Naive thymus-derived CD8-positive, alpha-beta T cell (primary cell): ENCODE measurements at regions of chr9 and their contacts with region 1.

Region 1: DNA sequence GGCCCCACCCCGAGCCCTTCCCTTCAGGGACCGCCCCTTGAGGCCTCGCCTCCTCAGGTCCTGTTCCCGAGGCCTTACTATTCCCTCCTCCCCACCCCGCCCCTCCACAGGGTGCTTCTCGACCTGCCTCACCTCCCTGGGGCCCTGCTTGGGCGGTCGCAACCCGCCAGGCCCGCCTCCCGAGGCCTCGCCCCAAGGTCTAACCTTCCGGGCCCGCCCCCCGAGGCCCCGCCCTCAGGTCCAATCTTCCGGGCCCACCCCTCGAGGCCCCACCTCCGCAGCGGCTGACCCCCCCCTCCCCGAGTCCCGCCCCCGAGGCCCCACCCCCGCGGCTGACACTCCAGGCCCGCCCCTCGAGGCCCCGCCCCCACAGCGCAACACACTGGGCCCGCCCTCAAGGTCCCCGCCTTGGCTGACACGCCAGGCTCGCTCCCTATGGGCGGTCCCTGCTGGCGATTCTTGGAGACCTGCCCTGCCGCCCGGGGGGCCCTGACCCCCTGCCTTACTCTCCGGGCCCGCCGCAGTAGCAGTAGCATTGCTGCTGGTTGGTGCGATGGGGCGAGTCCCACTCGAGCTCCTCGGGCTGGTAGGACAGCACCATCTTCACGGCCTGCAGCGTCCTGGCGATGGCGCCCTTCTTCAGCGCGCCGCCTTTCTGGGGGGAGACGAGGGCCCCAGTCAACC is 8.2 kb downstream of the PHF19 start:
- DNase-seq: peak; percentile 93 to 100 (median 96)
- ATAC-seq: peak; percentile 85
- H3K4me3 Mint-ChIP-seq: peak overlapping the region; percentile 80 to 98 (median 94)
- H3K27ac Mint-ChIP-seq: peak overlapping the region; percentile 92 to 99 (median 96)
- H3K4me1 Mint-ChIP-seq: peaks cover 11 to 43% (median 27%) of the 10 kb centered on the region in 4 donors
- H3K27me3 Mint-ChIP-seq: no peaks in the 10 kb centered on the region

Region 2: GRCh38 chr9:120730661-120731514 is 137.9 kb before region 1 on chr9:
- POLR2A ChIA-PET with region 1: no interaction called
- DNase-seq: no peak
- ATAC-seq: no peak
- H3K4me3 Mint-ChIP-seq: no peak overlapping the region
- H3K27ac Mint-ChIP-seq: no peak overlapping the region
- H3K4me1 Mint-ChIP-seq: peaks cover 5 to 14% (median 6%) of the 10 kb centered on the region in 4 donors
- H3K27me3 Mint-ChIP-seq: no peaks in the 10 kb centered on the region

Region 3: DNA sequence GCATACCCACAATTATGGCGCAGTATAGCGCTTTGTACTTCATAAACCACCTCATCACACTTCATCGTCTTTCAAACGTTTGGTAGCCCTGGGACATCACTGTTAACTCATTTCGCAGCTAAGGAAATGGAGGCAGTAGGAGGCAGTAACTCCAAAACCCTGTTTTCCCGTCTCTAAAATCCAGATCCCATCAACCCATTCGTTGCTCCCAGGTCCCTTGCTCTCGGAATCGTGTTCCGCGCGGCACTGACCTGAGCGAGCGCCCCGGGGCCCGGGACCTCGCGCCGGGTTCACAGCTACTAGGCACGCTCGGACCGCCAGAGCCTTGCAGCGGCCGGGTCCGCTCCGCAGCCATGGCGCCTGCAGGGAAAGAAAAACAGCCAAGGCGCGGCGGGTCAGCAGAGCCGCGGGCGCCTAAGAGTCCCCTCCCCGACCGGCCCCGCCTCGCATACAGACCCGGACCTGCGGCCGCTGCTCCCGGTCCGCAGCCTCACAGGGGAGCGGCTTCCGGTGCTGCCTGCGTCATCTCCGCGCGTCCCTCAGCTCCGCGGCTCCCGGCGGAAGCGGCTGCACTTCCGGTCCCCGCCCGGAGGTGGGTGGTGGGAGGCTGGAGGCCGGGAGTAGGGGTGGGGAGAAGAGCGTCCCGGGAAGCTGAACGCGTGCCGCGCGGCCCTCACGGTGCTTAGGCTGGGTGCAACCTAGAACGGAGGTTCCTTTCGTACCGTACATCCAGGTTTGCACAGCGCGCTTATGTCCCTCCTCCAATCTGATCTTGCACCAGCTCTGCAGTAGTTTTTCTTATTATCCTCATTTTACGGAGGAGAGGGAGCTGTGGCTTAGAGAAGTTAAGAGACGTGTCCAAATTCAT is 75.7 kb before region 1 on chr9 and contains the start of gene FBXW2:
- POLR2A ChIA-PET with region 1: interaction called, 27 read pairs
- DNase-seq: peak; percentile 75 to 87 (median 80)
- ATAC-seq: peak; percentile 81 to 84
- H3K4me3 Mint-ChIP-seq: peak within 1 kb of the TSS; percentile 82 to 98 (median 91)
- H3K27ac Mint-ChIP-seq: peak within 1 kb of the TSS; percentile 90 to 99 (median 97)
- H3K4me1 Mint-ChIP-seq: peaks cover 20 to 58% (median 56%) of the 10 kb centered on the region in 4 donors
- H3K27me3 Mint-ChIP-seq: no peaks in the 10 kb centered on the region
- polyA plus RNA-seq, gene FBXW2: 29.6 to 37.1 (median 31.7) TPM

Region 4: GRCh38 chr9:120807607-120808379 is 61.0 kb before region 1 on chr9:
- POLR2A ChIA-PET with region 1: no interaction called
- DNase-seq: no peak
- ATAC-seq: no peak
- H3K4me3 Mint-ChIP-seq: no peak overlapping the region
- H3K27ac Mint-ChIP-seq: no peak overlapping the region
- H3K4me1 Mint-ChIP-seq: peaks cover 0 to 3% (median 0%) of the 10 kb centered on the region in 4 donors
- H3K27me3 Mint-ChIP-seq: no peaks in the 10 kb centered on the region

Region 5: GRCh38 chr9:120842690-120843499 is 25.9 kb before region 1 on chr9 and contains the start of gene PSMD5:
- POLR2A ChIA-PET with region 1: interaction called, 37 read pairs
- DNase-seq: peak; percentile 83 to 99 (median 96)
- ATAC-seq: peak; percentile 88
- H3K4me3 Mint-ChIP-seq: peak within 1 kb of the TSS; percentile 90 to 100 (median 93)
- H3K27ac Mint-ChIP-seq: peak within 1 kb of the TSS; percentile 92 to 98 (median 96)
- H3K4me1 Mint-ChIP-seq: peaks cover 40 to 86% (median 81%) of the 10 kb centered on the region in 4 donors
- H3K27me3 Mint-ChIP-seq: no peaks in the 10 kb centered on the region
- polyA plus RNA-seq, gene PSMD5: 13.7 to 23.4 (median 23.3) TPM

Region 6: DNA sequence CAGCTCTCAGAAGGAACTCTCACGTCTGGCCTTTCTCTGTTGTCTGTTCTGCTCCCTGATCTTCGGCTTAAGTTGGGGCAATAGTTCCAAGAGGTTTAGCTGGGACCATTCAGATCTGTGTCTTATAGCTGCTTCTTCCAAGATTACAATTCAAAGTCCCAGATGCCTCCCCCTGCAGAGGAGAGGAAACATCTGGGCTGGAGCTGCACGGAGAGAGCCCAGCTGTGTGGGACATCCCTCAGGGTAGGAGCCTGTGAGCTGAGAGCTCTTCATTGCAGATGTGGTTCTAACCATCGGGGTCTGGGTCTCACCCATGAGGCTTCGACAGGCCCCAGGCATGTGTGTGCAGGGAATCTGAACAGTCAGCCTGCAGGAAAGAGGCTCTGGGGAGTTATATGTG is 17.1 kb after region 1 on chr9:
- POLR2A ChIA-PET with region 1: interaction called, 320 read pairs
- DNase-seq: no peak
- ATAC-seq: no peak
- H3K4me3 Mint-ChIP-seq: peak overlapping the region in 2 of 10 donors; percentile 7 to 20
- H3K27ac Mint-ChIP-seq: peak overlapping the region in 9 of 10 donors; percentile 7 to 92 (median 70)
- H3K4me1 Mint-ChIP-seq: peaks cover 33 to 79% (median 69%) of the 10 kb centered on the region in 4 donors
- H3K27me3 Mint-ChIP-seq: no peaks in the 10 kb centered on the region

Region 7: DNA sequence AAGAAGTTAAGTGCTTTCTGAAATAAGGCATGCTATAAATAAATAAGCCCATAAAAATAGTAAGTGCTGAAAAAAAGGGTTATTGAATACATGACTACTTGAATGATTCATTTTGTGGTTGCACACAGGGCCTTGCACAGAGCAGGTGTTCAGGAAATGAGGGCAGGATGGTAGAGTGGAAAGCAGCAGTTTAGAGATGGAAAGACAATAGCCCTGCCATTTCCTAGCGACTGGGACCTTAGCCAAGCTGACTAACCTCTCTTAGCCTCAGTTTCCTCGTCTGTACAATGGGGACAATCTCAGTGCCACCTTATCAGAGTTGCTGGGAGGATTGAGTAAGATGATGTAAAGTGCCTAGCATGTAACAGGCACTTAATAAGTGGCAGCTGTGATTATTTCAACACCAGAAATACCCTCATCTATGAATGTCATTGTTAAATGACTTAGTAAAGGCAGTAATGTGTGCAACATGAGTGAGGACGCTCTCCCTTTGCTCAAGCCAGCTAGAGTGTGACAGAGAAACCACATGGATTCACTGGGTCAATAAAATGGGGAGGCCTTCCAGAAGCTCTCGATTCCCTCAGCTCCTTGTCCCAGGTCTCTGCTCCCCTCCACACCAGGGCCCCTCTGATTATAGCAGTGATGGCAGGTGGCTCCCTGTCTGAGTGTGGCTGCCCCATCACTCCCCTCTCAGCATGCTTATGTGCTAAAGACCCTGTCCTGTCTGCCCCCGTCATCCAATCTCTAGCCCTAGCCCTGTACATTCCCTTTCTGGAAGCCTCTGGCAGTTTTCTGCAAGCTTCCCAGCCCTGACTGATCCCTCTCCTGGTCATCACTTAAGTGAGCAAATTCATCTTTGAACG is 24.2 kb after region 1 on chr9:
- POLR2A ChIA-PET with region 1: interaction called, 320 read pairs
- DNase-seq: peak in 7 of 10 donors; percentile 39 to 82 (median 54)
- ATAC-seq: peak; percentile 29 to 61
- H3K4me3 Mint-ChIP-seq: peak overlapping the region in 9 of 10 donors; percentile 58 to 83 (median 77)
- H3K27ac Mint-ChIP-seq: peak overlapping the region; percentile 90 to 99 (median 98)
- H3K4me1 Mint-ChIP-seq: peaks cover 35 to 90% (median 76%) of the 10 kb centered on the region in 4 donors
- H3K27me3 Mint-ChIP-seq: no peaks in the 10 kb centered on the region

Region 8: GRCh38 chr9:120904061-120904977 is 35.5 kb after region 1 on chr9:
- POLR2A ChIA-PET with region 1: interaction called, 102 read pairs
- DNase-seq: peak; percentile 53 to 86 (median 76)
- ATAC-seq: peak; percentile 70 to 91
- H3K4me3 Mint-ChIP-seq: peak overlapping the region; percentile 40 to 82 (median 66)
- H3K27ac Mint-ChIP-seq: peak overlapping the region; percentile 92 to 100 (median 98)
- H3K4me1 Mint-ChIP-seq: peaks cover 37 to 91% (median 86%) of the 10 kb centered on the region in 4 donors
- H3K27me3 Mint-ChIP-seq: no peaks in the 10 kb centered on the region

Region 9: GRCh38 chr9:120936011-120936763 is 67.4 kb after region 1 on chr9:
- POLR2A ChIA-PET with region 1: interaction called, 580 read pairs
- DNase-seq: peak; percentile 69 to 91 (median 84)
- ATAC-seq: peak; percentile 55 to 72
- H3K4me3 Mint-ChIP-seq: peak overlapping the region; percentile 22 to 73 (median 62)
- H3K27ac Mint-ChIP-seq: peak overlapping the region; percentile 91 to 100 (median 99)
- H3K4me1 Mint-ChIP-seq: peaks cover 36 to 65% (median 62%) of the 10 kb centered on the region in 4 donors
- H3K27me3 Mint-ChIP-seq: no peaks in the 10 kb centered on the region